PC-9 (cell line): ENCODE measurements at regions of chr18 and their contacts with region 1.

Region 1: DNA sequence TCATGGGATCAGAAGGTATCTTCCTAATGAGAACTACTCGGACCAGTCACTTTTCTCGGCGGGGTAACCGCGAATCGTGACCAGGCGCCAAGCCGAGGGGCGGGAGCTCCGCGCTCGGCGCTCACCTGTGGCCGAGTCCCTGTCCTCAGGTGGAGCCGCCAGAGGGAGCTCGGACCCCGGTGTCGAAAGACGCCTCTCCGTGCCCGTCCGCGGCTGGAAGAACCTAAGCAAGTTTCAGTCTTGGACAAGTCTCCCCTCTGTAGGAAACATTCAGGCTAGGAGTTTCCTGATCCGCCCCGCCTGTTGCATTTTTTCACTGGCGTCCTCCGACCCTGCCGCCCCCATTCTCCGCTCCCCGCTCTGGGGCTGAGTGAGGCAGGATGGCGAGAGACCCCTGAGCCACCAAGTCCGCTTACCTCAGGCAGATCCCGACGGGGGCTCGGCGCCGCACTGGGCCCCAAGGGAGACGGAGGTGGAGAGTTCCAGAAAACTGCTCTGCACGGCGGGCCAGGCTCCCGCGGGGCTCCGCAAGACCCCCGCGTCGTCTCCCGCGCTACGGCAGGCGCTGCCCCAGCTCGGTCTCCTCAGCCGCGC is 478 bp downstream of the DSEL start:
- DNase-seq: peak; percentile 73 to 84
- H3K4me3 ChIP-seq: peak overlapping the region; percentile 92
- H3K27ac ChIP-seq: peak overlapping the region; percentile 46
- H3K4me1 ChIP-seq: 0 out of 2 replicates have a peak, but pooled peaks cover 8% of the 10 kb centered on the region
- H3K27me3 ChIP-seq: no peaks in the 10 kb centered on the region
- CTCF ChIP-seq: peak; percentile 74

Region 2: DNA sequence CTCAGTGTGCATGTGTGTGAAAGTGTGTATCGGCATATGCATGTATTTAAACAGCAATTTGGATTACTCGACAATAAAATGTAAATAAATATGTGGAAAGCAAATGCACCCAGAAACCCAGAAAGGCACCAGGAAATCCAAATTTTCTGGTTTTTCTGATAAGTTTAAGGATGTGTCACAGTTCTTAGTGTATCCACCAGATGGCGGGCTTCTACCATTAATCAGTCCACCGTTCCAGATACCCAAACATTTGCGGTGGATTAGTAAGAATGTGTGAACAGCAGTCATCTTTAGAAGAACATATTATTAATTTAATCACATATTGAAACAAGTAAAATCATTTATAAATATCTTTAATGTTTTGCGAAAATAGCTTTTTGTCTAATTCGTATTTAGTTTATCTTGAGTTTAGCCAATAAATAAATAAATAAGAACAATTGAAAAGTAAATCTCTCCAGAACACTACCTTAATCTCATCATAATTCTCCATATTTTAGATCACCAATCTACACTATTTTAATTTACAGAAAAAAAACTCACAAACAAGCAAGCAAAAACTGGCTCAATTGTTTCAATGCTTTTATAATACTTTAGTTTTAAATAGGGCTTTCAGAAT is 298.4 kb before region 1 on chr18:
- CTCF ChIA-PET with region 1: no interaction called
- POLR2A ChIA-PET with region 1: no interaction called
- intact Hi-C with region 1: loop called (anchors 1 kb)
- DNase-seq: peak; percentile 23 to 38
- H3K4me3 ChIP-seq: no peak overlapping the region
- H3K27ac ChIP-seq: no peak overlapping the region
- H3K4me1 ChIP-seq: no peaks in the 10 kb centered on the region
- H3K27me3 ChIP-seq: no peaks in the 10 kb centered on the region
- CTCF ChIP-seq: peak; percentile 88

Region 3: GRCh38 chr18:67550872-67551520 is 35.0 kb after region 1 on chr18:
- CTCF ChIA-PET with region 1: no interaction called
- POLR2A ChIA-PET with region 1: no interaction called
- intact Hi-C with region 1: no loop called
- DNase-seq: no peak
- H3K4me3 ChIP-seq: no peak overlapping the region
- H3K27ac ChIP-seq: no peak overlapping the region
- H3K4me1 ChIP-seq: no peaks in the 10 kb centered on the region
- H3K27me3 ChIP-seq: no peaks in the 10 kb centered on the region
- CTCF ChIP-seq: no peak

Region 4: GRCh38 chr18:67783196-67783946 is 267.3 kb after region 1 on chr18:
- CTCF ChIA-PET with region 1: no interaction called
- POLR2A ChIA-PET with region 1: no interaction called
- intact Hi-C with region 1: loop called (anchors 5 kb)
- DNase-seq: peak in 1 of 2 experiments; percentile 66
- H3K4me3 ChIP-seq: no peak overlapping the region
- H3K27ac ChIP-seq: peak overlapping the region; percentile 70
- H3K4me1 ChIP-seq: peaks cover 17% of the 10 kb centered on the region
- H3K27me3 ChIP-seq: no peaks in the 10 kb centered on the region
- CTCF ChIP-seq: no peak

Region 5: GRCh38 chr18:67875944-67876343 is 359.9 kb after region 1 on chr18:
- CTCF ChIA-PET with region 1: no interaction called
- POLR2A ChIA-PET with region 1: interaction called, 12 read pairs
- intact Hi-C with region 1: loop called (anchors 5 kb)
- DNase-seq: no peak
- H3K4me3 ChIP-seq: no peak overlapping the region
- H3K27ac ChIP-seq: 0 out of 2 replicates have a peak overlapping the region, but pooled peaks have one; percentile 18
- H3K4me1 ChIP-seq: peaks cover 13% of the 10 kb centered on the region
- H3K27me3 ChIP-seq: no peaks in the 10 kb centered on the region
- CTCF ChIP-seq: no peak

Region 6: DNA sequence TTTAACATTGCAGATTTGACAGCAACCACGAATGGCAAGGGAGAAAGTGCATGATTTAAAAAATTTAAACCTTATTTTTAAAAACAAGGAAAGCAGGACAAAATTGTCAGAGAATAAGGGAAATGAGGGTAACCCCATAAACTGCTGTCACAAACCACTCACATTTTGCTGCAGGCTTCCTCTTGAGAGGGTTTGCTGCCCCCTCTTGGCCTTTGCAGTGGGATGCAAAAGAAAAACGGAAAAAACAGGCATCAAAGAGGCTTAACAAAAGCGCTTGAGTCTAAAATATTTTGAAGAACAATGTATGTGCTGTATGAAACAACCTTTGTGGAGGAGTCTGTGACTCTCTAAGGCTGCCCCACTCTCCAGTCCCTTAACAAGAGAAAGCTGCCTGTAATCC is 1107.3 kb after region 1 on chr18:
- CTCF ChIA-PET with region 1: no interaction called
- POLR2A ChIA-PET with region 1: no interaction called
- intact Hi-C with region 1: loop called (anchors 1 kb)
- DNase-seq: peak in 1 of 2 experiments; percentile 26
- H3K4me3 ChIP-seq: no peak overlapping the region
- H3K27ac ChIP-seq: no peak overlapping the region
- H3K4me1 ChIP-seq: no peaks in the 10 kb centered on the region
- H3K27me3 ChIP-seq: no peaks in the 10 kb centered on the region
- CTCF ChIP-seq: peak; percentile 77

Region 7: GRCh38 chr18:68735483-68736343 is 1219.7 kb after region 1 on chr18:
- CTCF ChIA-PET with region 1: no interaction called
- POLR2A ChIA-PET with region 1: no interaction called
- intact Hi-C with region 1: loop called (anchors 10 kb)
- DNase-seq: peak in 1 of 2 experiments; percentile 3
- H3K4me3 ChIP-seq: no peak overlapping the region
- H3K27ac ChIP-seq: no peak overlapping the region
- H3K4me1 ChIP-seq: no peaks in the 10 kb centered on the region
- H3K27me3 ChIP-seq: no peaks in the 10 kb centered on the region
- CTCF ChIP-seq: peak; percentile 78